A549 (cell line): ENCODE measurements at regions of chr15 and their contacts with region 1.

Region 1: GRCh38 chr15:74540761-74541493 is at the start of gene ARID3B:
- DNase-seq: peak; percentile 91 to 95
- ATAC-seq: peak; percentile 99
- H3K4me3 ChIP-seq: peak within 1 kb of the TSS; percentile 74
- H3K27ac ChIP-seq: peak within 1 kb of the TSS; percentile 83 to 94
- H3K4me1 ChIP-seq: peaks cover 21% of the 10 kb centered on the region
- CTCF ChIP-seq: no peak
- EP300 ChIP-seq: no peak
- POLR2A ChIP-seq: peak; percentile 44
- RAD21 ChIP-seq: no peak
- polyA plus RNA-seq, gene ARID3B: 2.3 and 2.5 TPM in 2 replicates

Region 2: DNA sequence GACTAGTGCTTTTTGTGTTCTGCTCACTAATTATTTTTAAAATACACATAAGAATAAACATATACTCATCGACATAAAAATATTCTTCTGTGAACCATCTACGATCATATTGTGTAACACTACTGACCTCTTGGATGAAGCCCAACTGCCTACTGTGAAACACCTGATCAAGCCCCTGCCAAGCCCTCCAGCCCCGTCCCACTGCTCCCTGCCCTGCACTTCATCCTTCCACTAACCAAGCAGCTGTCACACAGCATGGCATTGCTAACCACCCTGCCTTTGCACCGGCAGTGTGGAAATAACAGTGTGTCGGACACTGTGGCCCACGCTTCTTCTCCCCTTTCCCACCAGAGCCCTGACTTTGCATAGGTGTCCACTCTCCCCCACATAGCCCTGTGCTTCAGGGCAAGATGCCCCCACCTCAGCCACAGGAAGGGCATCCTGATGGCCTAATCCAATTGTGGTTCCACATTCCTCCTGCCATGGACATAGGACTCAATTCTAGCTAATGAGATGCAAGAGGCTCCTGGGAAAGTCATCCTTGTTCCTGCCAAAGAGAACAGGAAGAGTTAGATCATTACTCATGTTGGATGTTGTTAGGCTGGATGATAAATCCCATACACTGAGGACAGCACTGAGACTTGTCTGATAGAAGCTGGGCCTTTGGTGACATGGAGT is 35.0 kb before region 1 on chr15:
- CTCF ChIA-PET with region 1: no interaction called
- POLR2A ChIA-PET with region 1: no interaction called
- DNase-seq: no peak
- ATAC-seq: no peak
- H3K4me3 ChIP-seq: no peak overlapping the region
- H3K27ac ChIP-seq: no peak overlapping the region
- H3K4me1 ChIP-seq: no peaks in the 10 kb centered on the region
- CTCF ChIP-seq: no peak
- EP300 ChIP-seq: no peak
- POLR2A ChIP-seq: no peak
- RAD21 ChIP-seq: no peak

Region 3: DNA sequence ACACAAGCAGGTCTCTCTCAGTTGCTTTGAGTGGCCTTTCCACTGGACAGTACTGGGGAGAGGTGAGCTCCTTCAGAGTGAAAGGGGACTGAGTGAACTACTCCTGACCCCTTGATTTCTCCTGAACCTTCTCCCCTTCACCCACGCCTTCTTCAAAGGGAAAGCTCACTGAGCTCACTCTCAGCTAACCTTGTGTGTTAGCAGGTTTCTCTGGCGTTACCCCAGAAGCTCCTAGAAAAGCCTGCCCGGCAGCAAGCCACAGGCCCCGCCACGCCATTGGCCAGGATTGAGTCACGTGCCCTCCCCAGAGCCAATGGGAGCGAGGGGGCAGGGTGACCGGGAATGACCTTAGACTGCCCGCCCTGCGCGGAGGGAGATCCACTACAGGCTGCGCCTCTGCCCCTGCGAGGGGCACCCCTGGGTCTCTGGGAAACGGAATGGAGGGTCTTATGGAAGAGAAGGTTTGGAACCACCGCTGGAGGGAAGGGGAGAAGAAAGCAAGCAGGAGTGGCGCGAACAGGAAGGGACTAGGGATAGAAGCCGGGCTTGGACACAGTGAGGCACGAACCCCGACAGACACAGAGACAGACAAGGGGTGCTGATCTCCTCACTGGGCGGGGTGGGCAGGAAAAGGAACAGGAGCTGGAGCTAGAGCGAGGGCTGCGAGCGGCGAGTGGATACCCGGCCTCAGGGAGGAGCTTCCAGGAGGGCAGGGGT is 57.4 kb after region 1 on chr15:
- CTCF ChIA-PET with region 1: no interaction called
- POLR2A ChIA-PET with region 1: interaction called, 14 read pairs
- DNase-seq: peak; percentile 75 to 93
- ATAC-seq: peak; percentile 94 to 99
- H3K4me3 ChIP-seq: peak overlapping the region; percentile 63
- H3K27ac ChIP-seq: peak overlapping the region; percentile 88 to 90
- H3K4me1 ChIP-seq: peaks cover 11% of the 10 kb centered on the region; the same call in 2 of the 3 replicates
- CTCF ChIP-seq: no peak
- EP300 ChIP-seq: no peak
- POLR2A ChIP-seq: peak; percentile 93
- RAD21 ChIP-seq: no peak

Region 4: GRCh38 chr15:74615508-74616365 is 74.8 kb after region 1 on chr15 and contains the start of gene CLK3:
- CTCF ChIA-PET with region 1: interaction called, 7 read pairs
- POLR2A ChIA-PET with region 1: interaction called, 13 read pairs
- DNase-seq: peak; percentile 78 to 92
- ATAC-seq: peak; percentile 82 to 90
- H3K4me3 ChIP-seq: peak within 1 kb of the TSS; percentile 93
- H3K27ac ChIP-seq: peak within 1 kb of the TSS; percentile 91 to 98
- H3K4me1 ChIP-seq: peaks cover 14% of the 10 kb centered on the region; the same call in 1 of the 3 replicates
- CTCF ChIP-seq: no peak
- EP300 ChIP-seq: peak in 1 of 2 experiments; percentile 27; a peak in 1 of 5 replicates
- POLR2A ChIP-seq: peak; percentile 56
- RAD21 ChIP-seq: no peak
- polyA plus RNA-seq, gene CLK3: 35.7 and 42.5 TPM in 2 replicates